ENCODE measurements at regions of chr1 and their contacts with region 1.

Region 1: GRCh38 chr1:84433258-84434080 is 35.2 kb downstream of the DNASE2B start:
- DNase-seq: no peak

Region 2: GRCh38 chr1:83931658-83932253 is 501.7 kb before region 1 on chr1:
- intact Hi-C with region 1: loop called (anchors 5 kb)
- DNase-seq: no peak

Region 3: GRCh38 chr1:84122780-84123382 is 310.6 kb before region 1 on chr1:
- intact Hi-C with region 1: loop called (anchors 5 kb)
- DNase-seq: no peak

Region 4: DNA sequence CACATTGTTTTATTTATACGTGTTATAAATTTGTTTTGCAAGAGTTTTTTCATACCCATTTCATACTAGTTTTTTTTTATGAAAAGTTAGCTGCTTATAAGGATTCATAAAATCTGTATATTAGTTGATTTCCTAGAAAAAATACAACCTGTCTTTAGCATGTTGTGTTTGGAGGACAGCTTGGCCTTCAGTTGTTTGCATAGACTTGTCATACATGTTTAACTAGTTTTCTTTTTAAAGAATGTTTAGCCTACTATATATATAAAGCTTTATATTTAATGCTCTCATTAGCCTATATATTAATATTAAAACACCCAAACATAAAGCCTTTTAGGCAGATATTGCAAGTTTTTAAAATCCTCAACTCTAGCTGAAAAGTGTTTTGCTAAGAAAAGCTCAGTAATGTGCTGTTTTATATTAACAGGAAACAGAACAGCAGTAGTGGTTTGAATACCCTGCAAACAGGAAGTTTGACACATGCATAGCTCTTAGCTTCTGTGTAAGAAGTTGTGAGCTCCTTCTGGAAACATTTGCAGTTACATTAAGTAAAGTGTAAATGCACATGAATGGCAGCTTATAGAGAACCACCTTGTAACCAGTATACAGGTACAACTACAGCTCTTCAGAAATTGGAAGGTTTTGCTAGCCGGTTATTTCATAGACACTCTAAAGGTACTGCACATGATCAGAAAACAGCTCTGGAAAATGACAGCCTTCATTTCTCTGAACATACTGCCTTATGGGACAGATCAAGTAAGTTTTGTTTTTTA is 289.5 kb before region 1 on chr1 and contains the start of gene PRKACB:
- intact Hi-C with region 1: loop called (anchors 5 kb)
- DNase-seq: no peak
- total RNA-seq, gene PRKACB: 41.8 TPM

Region 5: DNA sequence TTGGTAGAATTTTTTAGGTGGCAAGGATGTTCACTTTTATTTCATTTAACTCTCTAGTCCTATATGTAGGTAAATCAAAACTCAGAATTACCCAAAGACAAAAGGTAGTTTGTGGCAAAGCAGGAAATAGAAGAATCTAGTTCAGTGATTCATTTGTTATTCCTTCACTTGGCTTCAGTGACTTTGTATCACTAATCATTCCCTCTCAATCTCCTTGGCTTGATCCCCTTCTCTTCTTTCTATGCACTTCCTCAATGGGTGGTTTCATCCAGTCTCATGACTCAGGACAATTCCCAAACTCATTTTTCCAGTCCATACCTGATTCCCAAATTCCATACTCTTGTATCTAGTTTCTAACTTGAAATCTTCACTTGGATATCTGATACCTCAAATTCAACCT is 224.5 kb before region 1 on chr1:
- intact Hi-C with region 1: no loop called
- DNase-seq: no peak

Region 6: DNA sequence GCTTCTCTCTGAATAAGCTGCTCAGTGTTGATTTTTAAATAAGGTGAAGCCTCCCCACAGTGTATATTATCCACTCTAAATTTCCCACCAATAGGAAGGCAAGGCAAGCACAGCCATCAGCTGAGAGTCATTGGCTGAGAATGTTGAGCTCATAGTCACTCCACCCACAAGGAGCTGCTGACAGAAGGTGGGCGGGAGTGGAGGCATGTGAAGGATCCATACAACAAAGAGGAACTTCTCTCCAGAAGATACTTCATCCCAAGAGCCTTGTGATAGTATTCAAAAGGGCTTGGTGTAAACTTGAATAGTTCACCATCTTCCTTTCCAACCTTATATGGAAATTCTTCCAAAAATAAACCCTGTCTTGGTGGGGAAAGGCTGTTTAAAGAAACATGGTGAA is 89.2 kb before region 1 on chr1:
- intact Hi-C with region 1: no loop called
- DNase-seq: no peak

Region 7: DNA sequence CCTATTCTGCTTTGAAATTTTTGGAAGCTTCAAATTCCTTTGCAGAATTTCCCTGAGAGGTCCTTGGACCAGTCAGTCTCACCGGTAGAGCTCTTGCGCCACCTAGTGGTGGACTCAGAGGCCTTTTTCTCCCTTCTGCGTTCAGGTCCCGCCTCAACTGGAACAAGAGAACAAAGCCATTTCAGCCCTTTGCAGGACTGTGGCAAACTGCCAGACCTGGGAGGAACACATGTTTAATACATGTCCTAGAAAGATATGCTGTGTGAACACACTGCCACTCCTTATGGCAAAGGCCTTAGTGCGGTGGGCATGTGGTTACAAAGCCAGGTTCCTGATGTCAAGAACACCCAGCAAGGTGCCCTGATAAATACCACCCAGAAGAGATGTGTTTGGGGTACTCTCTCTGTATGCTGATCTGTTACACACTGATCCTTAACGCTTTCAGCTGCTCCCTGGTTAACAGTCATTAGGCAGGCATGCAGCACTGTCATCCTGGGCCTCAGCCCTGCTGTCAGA is 339.0 kb after region 1 on chr1:
- intact Hi-C with region 1: loop called (anchors 10 kb)
- DNase-seq: no peak

Measured in cardiac septum (tissue), 1 donor.